ENCODE measurements at regions of chr2 and their contacts with region 1.

Region 1: DNA sequence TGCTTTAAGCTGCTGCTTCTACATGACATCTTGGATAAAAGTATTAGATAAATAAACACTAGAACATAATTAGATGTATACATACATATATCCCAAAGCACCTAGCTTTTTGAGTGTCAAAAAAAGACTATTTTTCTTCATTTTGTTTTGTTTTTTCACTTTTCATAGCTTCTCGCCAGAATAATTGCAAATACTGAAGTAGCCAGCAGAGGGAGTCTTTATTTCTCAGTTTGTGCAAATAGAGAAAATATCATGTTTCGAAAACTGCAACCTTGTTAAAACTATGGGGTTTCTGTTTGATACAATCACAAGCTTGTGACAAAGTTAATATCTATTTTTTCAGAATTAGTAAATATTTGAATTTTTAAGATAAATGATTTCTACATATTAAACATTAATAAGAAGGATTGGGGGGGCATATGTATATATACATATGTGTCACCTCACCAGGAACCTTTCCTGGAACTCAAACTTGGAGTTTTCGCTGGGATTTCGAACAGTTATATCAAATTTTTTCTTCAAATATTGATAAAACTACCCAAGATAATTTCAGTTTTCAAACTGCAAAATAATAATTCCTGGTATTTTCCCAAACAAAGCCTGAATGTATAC is 61.0 kb downstream of the GRB14 start:
- DNase-seq: no peak
- H3K4me3 ChIP-seq: peak overlapping the region in 1 of 4 donors; percentile 9
- H3K27ac ChIP-seq: peak overlapping the region in 1 of 4 donors; percentile 70
- H3K4me1 ChIP-seq: peaks cover 0 to 24% (median 18%) of the 10 kb centered on the region in 4 donors
- H3K27me3 ChIP-seq: no peaks in the 10 kb centered on the region
- CTCF ChIP-seq: peak; percentile 17 to 72 (median 58)
- EP300 ChIP-seq: no peak
- POLR2A ChIP-seq: no peak

Region 2: GRCh38 chr2:164599966-164600589 is 39.8 kb after region 1 on chr2:
- intact Hi-C with region 1: loop called (anchors 2 kb)
- DNase-seq: no peak
- H3K4me3 ChIP-seq: no peak overlapping the region
- H3K27ac ChIP-seq: no peak overlapping the region
- H3K4me1 ChIP-seq: peaks cover 0 to 22% (median 9%) of the 10 kb centered on the region in 4 donors
- H3K27me3 ChIP-seq: no peaks in the 10 kb centered on the region
- CTCF ChIP-seq: peak; percentile 41 to 55 (median 52)
- EP300 ChIP-seq: no peak
- POLR2A ChIP-seq: no peak

Region 3: GRCh38 chr2:164717000-164717803 is 156.9 kb after region 1 on chr2:
- intact Hi-C with region 1: loop called (anchors 2 kb)
- DNase-seq: no peak
- H3K4me3 ChIP-seq: no peak overlapping the region
- H3K27ac ChIP-seq: no peak overlapping the region
- H3K4me1 ChIP-seq: peaks cover 0 to 12% (median 4%) of the 10 kb centered on the region in 4 donors
- H3K27me3 ChIP-seq: no peaks in the 10 kb centered on the region
- CTCF ChIP-seq: peak in 3 of 4 experiments; percentile 23 to 42 (median 25)
- EP300 ChIP-seq: no peak
- POLR2A ChIP-seq: no peak

Region 4: GRCh38 chr2:164859251-164859800 is 299.0 kb after region 1 on chr2:
- intact Hi-C with region 1: no loop called
- DNase-seq: no peak
- H3K4me3 ChIP-seq: no peak overlapping the region
- H3K27ac ChIP-seq: no peak overlapping the region
- H3K4me1 ChIP-seq: no peaks in the 10 kb centered on the region
- H3K27me3 ChIP-seq: no peaks in the 10 kb centered on the region
- CTCF ChIP-seq: no peak
- EP300 ChIP-seq: no peak
- POLR2A ChIP-seq: no peak